MCF 10A (cell line): ENCODE measurements at regions of chr13 and their contacts with region 1.

Region 1: DNA sequence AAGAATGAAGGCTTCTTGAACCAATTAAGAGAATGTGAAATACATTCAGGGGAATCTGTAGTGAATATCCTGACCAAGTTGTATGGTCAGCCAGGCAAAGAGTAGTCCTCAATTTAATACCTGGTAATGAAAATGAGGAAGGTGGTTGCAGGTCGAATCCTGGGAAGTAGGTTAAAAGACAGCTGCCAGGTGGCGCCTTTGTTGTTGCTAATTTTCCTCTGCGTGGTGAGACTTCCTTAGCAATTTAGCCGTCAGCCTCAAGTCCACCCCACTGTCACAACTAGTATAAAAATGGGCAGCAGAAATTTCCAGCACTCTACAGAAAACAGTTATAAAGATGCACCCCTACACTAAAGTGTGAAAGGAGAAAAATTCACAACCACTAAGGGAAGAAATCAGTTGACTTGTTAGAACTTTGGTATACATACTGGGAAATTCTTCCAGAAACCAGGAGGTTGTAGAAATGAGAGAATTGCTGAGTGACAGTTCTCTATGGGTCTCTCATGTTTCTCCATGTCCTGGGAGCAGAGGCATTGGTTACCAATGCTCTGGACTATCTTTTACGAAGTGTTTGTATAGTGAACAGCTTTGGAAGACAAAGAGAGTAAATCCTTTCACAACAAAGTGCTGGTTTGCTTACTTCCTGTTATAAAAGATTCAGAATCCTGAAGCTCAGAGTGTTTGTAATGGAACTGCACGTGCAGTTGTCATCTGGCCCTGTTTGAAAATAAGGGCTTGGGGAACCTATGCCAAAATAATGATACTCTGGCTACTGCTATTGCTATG is 235.9 kb downstream of the NHLRC3 start:
- DNase-seq: peak; percentile 18
- H3K4me3 Mint-ChIP-seq: no peak overlapping the region
- H3K27ac Mint-ChIP-seq: no peak overlapping the region
- H3K4me1 Mint-ChIP-seq: no peaks in the 10 kb centered on the region
- H3K27me3 Mint-ChIP-seq: peaks cover 85% of the 10 kb centered on the region
- CTCF ChIP-seq: peak; percentile 27

Region 2: GRCh38 chr13:39317291-39317690 is 43.1 kb after region 1 on chr13:
- CTCF ChIA-PET with region 1: no interaction called
- POLR2A ChIA-PET with region 1: no interaction called
- intact Hi-C with region 1: no loop called
- DNase-seq: peak; percentile 63
- H3K4me3 Mint-ChIP-seq: no peak overlapping the region
- H3K27ac Mint-ChIP-seq: no peak overlapping the region
- H3K4me1 Mint-ChIP-seq: no peaks in the 10 kb centered on the region
- H3K27me3 Mint-ChIP-seq: peaks cover 4% of the 10 kb centered on the region
- CTCF ChIP-seq: no peak

Region 3: DNA sequence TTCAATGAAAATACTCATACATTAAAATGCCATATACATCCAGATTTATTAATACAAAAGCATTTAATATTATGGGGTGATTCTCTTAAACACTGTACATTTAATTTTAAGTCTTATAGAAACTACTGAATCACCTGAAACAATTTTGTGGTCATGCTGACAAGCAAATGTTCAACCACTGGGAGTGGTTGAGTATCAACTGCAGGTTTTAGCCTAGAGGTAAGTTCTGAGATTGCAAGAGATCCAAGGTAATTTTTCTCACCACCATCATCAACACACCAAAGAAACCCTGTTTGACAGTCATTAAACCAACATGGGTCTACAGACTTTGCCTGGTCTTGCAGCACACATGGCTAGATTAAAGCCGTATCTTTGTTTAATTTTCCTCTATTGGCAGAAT is 132.5 kb after region 1 on chr13:
- CTCF ChIA-PET with region 1: no interaction called
- POLR2A ChIA-PET with region 1: no interaction called
- intact Hi-C with region 1: loop called (anchors 10 kb)
- DNase-seq: peak; percentile 25
- H3K4me3 Mint-ChIP-seq: no peak overlapping the region
- H3K27ac Mint-ChIP-seq: no peak overlapping the region
- H3K4me1 Mint-ChIP-seq: peaks cover 6% of the 10 kb centered on the region
- H3K27me3 Mint-ChIP-seq: no peaks in the 10 kb centered on the region
- CTCF ChIP-seq: no peak

Region 4: GRCh38 chr13:39602614-39603366 is 328.6 kb after region 1 on chr13 and contains the start of gene LHFPL6:
- CTCF ChIA-PET with region 1: interaction called, 3 read pairs
- POLR2A ChIA-PET with region 1: no interaction called
- intact Hi-C with region 1: loop called (anchors 1 kb)
- DNase-seq: peak; percentile 74
- H3K4me3 Mint-ChIP-seq: peak within 1 kb of the TSS; percentile 85
- H3K27ac Mint-ChIP-seq: peak within 1 kb of the TSS; percentile 90
- H3K4me1 Mint-ChIP-seq: peaks cover 15% of the 10 kb centered on the region
- H3K27me3 Mint-ChIP-seq: no peaks in the 10 kb centered on the region
- CTCF ChIP-seq: peak; percentile 52
- total RNA-seq, gene LHFPL6: 8.9 and 9.8 TPM in 2 replicates

Region 5: DNA sequence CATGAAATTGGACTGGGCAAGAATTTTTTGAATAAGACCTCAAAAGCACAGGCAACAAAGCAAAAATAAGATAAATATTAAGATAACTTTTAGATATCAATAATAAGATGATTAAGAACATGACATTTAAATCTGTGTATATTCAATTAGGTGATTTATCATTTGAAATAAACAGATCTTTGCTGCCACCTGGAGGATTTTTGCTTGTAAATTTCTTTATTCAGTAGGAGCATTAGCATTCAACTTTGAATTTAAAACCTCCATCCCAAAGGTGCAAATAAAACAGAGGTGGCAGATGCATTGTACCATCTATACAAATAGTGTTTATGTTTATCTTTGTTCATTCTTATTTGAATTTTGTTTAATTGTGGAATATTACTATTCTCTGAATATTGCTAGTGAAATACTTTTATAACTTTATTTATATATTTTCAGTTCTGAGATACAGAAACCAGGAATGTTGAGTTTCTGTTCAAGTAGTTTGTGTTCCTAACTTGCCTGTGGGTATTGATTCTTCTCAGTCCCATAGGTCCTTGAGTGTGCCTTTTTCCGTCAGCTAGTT is 402.2 kb after region 1 on chr13:
- CTCF ChIA-PET with region 1: no interaction called
- POLR2A ChIA-PET with region 1: no interaction called
- intact Hi-C with region 1: loop called (anchors 5 kb)
- DNase-seq: peak; percentile 60
- H3K4me3 Mint-ChIP-seq: no peak overlapping the region
- H3K27ac Mint-ChIP-seq: peak overlapping the region; percentile 55
- H3K4me1 Mint-ChIP-seq: no peaks in the 10 kb centered on the region
- H3K27me3 Mint-ChIP-seq: no peaks in the 10 kb centered on the region
- CTCF ChIP-seq: no peak